ENCODE measurements at regions of chr12 and their contacts with region 1.

Region 1: GRCh38 chr12:49110464-49111155 is at the start of gene LMBR1L:
- DNase-seq: peak; percentile 85 to 99 (median 96)
- ATAC-seq: peak; percentile 93 to 94
- H3K4me3 Mint-ChIP-seq: peak within 1 kb of the TSS; percentile 89 to 99 (median 98)
- H3K27ac Mint-ChIP-seq: peak within 1 kb of the TSS; percentile 92 to 99 (median 98)
- H3K4me1 Mint-ChIP-seq: peaks cover 26 to 48% (median 44%) of the 10 kb centered on the region in 4 donors
- H3K27me3 Mint-ChIP-seq: no peaks in the 10 kb centered on the region
- polyA plus RNA-seq, gene LMBR1L: 34.0 to 45.8 (median 34.6) TPM

Region 2: GRCh38 chr12:49049566-49050413 is 60.8 kb before region 1 on chr12:
- POLR2A ChIA-PET with region 1: no interaction called
- DNase-seq: no peak
- ATAC-seq: no peak
- H3K4me3 Mint-ChIP-seq: no peak overlapping the region
- H3K27ac Mint-ChIP-seq: peak overlapping the region in 1 of 10 donors; percentile 71
- H3K4me1 Mint-ChIP-seq: peaks cover 11 to 26% (median 19%) of the 10 kb centered on the region in 4 donors
- H3K27me3 Mint-ChIP-seq: no peaks in the 10 kb centered on the region

Region 3: DNA sequence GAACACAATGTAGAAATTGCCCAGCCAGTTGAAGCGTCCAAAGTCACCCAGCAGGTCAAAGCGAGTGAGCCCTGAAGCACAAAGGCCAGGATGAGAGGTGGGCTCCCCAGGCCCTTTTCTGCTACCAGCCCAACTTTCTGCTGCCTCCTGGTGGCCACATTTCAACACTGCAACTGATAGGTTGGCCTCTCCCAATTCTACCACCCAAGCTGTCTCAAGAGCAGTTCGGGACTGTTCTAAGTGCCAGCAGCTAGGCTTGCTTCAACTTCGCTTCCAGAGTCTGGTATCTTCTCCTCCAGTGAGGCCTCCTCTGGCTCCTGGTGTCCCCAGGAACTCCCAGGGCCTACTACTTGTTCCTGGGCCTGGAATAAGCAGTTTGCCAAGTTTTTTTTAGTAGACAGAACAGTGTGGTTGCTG is 12.6 kb before region 1 on chr12:
- POLR2A ChIA-PET with region 1: interaction called, 28 read pairs
- DNase-seq: peak; percentile 43 to 80 (median 62)
- ATAC-seq: peak; percentile 55 to 60
- H3K4me3 Mint-ChIP-seq: no peak overlapping the region
- H3K27ac Mint-ChIP-seq: peak overlapping the region in 1 of 10 donors; percentile 32
- H3K4me1 Mint-ChIP-seq: peaks cover 14 to 23% (median 18%) of the 10 kb centered on the region in 4 donors
- H3K27me3 Mint-ChIP-seq: peaks cover 9 to 27% (median 18%) of the 10 kb centered on the region in 5 donors

Region 4: GRCh38 chr12:49121047-49121696 is 10.6 kb after region 1 on chr12:
- POLR2A ChIA-PET with region 1: interaction called, 11 read pairs
- DNase-seq: no peak
- ATAC-seq: no peak
- H3K4me3 Mint-ChIP-seq: no peak overlapping the region
- H3K27ac Mint-ChIP-seq: no peak overlapping the region
- H3K4me1 Mint-ChIP-seq: peaks cover 0 to 4% (median 1%) of the 10 kb centered on the region in 4 donors
- H3K27me3 Mint-ChIP-seq: no peaks in the 10 kb centered on the region